Activated CD4-positive, alpha-beta T cell treated with anti-CD3 and anti-CD28 coated beads, Interleukin-2, amount 10 ng/mL, durations not matched to agents 7 days and 5 days (primary cell): ENCODE measurements at regions of chr6 and their contacts with region 1.

Region 1: GRCh38 chr6:10722820-10723566 is at the start of gene TMEM14C:
- DNase-seq: peak; percentile 86
- H3K4me3 Mint-ChIP-seq: peak within 1 kb of the TSS; percentile 95
- H3K27ac Mint-ChIP-seq: peak within 1 kb of the TSS; percentile 97
- H3K4me1 Mint-ChIP-seq: peaks cover 67% of the 10 kb centered on the region
- H3K27me3 Mint-ChIP-seq: no peaks in the 10 kb centered on the region
- total RNA-seq, gene TMEM14C: 65.6 to 66.6 TPM

Region 2: GRCh38 chr6:10694302-10695085 is 28.5 kb before region 1 on chr6 and contains the starts of genes C6orf52 and PAK1IP1:
- CTCF ChIA-PET with region 1: interaction called, 16 read pairs
- POLR2A ChIA-PET with region 1: interaction called, 5 read pairs
- DNase-seq: peak; percentile 95
- H3K4me3 Mint-ChIP-seq: peak within 1 kb of the TSS; percentile 91
- H3K27ac Mint-ChIP-seq: peak within 1 kb of the TSS; percentile 100
- H3K4me1 Mint-ChIP-seq: peaks cover 44% of the 10 kb centered on the region
- H3K27me3 Mint-ChIP-seq: no peaks in the 10 kb centered on the region
- total RNA-seq, gene C6orf52: 1.1 to 1.9 TPM
- total RNA-seq, gene PAK1IP1: 13.4 to 15.1 TPM

Region 3: DNA sequence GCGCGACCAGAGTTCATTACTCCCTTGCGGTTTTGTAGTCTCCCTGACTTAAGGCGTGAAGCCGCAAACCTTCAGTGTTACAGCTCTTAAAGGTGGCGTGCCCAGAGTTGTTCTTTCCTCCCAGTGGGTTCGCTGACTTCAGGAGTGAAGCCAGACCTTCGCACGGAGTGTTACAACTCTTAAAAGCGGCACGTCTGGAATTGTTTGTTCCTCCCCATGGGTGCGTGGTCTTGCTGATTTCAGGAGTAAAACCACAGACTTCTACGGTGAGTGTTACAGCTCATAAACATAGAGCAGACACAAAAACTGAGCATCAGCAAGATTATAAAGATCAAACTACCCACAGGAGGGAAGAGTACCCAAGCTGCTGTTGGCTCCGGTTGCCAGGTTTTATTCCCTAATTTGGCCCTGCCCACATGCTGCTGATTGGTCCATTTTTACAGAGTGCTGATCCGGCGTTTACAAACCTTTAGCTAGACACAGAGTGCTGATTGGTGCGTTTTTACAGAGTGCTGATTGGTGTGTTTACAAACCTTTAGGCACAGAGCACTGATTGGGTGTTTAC is 10.2 kb after region 1 on chr6:
- CTCF ChIA-PET with region 1: interaction called, 13 read pairs
- POLR2A ChIA-PET with region 1: no interaction called
- DNase-seq: no peak
- H3K4me3 Mint-ChIP-seq: no peak overlapping the region
- H3K27ac Mint-ChIP-seq: no peak overlapping the region
- H3K4me1 Mint-ChIP-seq: peaks cover 2% of the 10 kb centered on the region
- H3K27me3 Mint-ChIP-seq: no peaks in the 10 kb centered on the region

Region 4: GRCh38 chr6:10747251-10747972 is 24.4 kb after region 1 on chr6 and contains the start of gene TMEM14B:
- CTCF ChIA-PET with region 1: interaction called, 10 read pairs
- POLR2A ChIA-PET with region 1: no interaction called
- DNase-seq: peak; percentile 99
- H3K4me3 Mint-ChIP-seq: peak within 1 kb of the TSS; percentile 93
- H3K27ac Mint-ChIP-seq: peak within 1 kb of the TSS; percentile 95
- H3K4me1 Mint-ChIP-seq: peaks cover 50% of the 10 kb centered on the region
- H3K27me3 Mint-ChIP-seq: no peaks in the 10 kb centered on the region
- total RNA-seq, gene TMEM14B: 78.3 to 83.6 TPM